Endothelial cell of umbilical vein (primary cell): ENCODE measurements at regions of chr6 and their contacts with region 1.

Region 1: DNA sequence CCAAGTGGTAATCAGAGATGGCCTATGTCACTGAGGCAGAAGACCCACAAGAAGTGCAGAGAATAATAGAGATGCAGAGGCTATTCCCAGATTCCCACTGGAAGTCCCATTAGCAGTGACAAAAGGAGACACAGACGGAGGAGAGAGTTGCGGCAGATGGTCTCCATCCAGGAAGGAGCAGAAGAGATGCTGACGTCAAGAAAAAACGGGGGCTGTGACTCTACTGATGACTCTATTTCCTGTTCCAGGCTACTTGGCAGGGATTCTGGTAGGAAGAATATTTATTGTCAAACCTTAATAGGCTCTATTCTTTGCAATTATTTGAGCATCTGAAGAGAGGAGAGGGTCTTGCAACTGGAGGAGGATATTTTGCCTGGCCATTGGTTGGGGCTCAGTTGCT is 246.0 kb upstream of the ECI2 start:
- DNase-seq: peak; percentile 68
- H3K4me3 ChIP-seq: no peak overlapping the region
- H3K27ac ChIP-seq: peak overlapping the region; percentile 64
- H3K4me1 ChIP-seq: peaks cover 15% of the 10 kb centered on the region
- H3K27me3 ChIP-seq: no peaks in the 10 kb centered on the region
- CTCF ChIP-seq: no peak
- POLR2A ChIP-seq: no peak

Region 2: GRCh38 chr6:4169028-4169789 is 212.2 kb before region 1 on chr6:
- CTCF ChIA-PET with region 1: no interaction called
- POLR2A ChIA-PET with region 1: no interaction called
- dilution Hi-C with region 1: no loop called
- intact Hi-C with region 1: no loop called
- DNase-seq: no peak
- H3K4me3 ChIP-seq: no peak overlapping the region
- H3K27ac ChIP-seq: no peak overlapping the region
- H3K4me1 ChIP-seq: no peaks in the 10 kb centered on the region
- H3K27me3 ChIP-seq: no peaks in the 10 kb centered on the region
- CTCF ChIP-seq: no peak
- POLR2A ChIP-seq: no peak

Region 3: DNA sequence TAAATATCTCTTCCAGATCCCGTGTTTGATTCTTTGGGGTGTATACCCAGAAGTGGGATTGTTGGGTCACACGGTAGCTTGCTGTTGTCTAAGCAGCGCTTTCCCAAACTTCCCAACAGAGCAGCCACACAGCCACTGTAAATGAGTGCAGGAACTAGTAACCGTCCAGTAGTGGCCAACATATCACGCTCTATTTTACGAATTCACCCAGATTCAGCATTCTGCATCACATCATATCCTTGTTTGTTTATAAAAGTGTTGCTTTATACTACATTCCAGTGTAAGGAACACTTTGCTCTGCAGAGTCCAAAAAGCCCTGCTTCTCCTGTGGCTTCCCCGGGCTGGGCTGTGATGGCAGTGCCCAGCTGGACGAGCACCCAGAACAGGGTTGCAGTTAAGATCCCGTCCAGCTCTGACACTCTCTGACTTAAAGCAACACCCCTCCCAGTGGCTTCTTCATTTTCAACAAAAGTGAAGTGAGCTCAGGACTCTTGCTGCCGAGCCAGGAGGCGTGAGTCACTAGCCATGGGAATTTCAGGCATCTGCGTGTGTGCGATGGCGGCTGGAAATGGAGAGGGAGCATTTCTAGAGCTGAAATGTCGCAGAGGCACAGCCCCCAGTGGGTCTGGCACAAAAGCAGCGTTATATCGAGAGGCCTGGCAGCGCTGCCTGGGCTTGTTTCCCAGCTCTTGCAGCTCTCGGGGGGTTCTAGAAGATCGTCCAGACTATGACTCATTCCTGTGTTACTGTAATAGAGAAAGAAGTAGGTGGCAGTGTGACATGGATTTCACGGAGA is 29.7 kb before region 1 on chr6:
- CTCF ChIA-PET with region 1: no interaction called
- POLR2A ChIA-PET with region 1: no interaction called
- dilution Hi-C with region 1: no loop called
- intact Hi-C with region 1: loop called (anchors 1 kb)
- DNase-seq: peak; percentile 69
- H3K4me3 ChIP-seq: no peak overlapping the region
- H3K27ac ChIP-seq: peak overlapping the region; percentile 35
- H3K4me1 ChIP-seq: peaks cover 24% of the 10 kb centered on the region
- H3K27me3 ChIP-seq: no peaks in the 10 kb centered on the region
- CTCF ChIP-seq: no peak
- POLR2A ChIP-seq: no peak